Caco-2 (cell line): ENCODE measurements at regions of chr14 and their contacts with region 1.

Region 1: GRCh38 chr14:51651388-51652167 is at the start of gene FRMD6:
- DNase-seq: peak; percentile 89
- H3K4me3 ChIP-seq: peak within 1 kb of the TSS; percentile 96
- H3K4me3 Mint-ChIP-seq: peak within 1 kb of the TSS; percentile 77
- H3K27ac Mint-ChIP-seq: peak within 1 kb of the TSS; percentile 82
- H3K4me1 ChIP-seq: peaks cover 40% of the 10 kb centered on the region
- H3K4me1 Mint-ChIP-seq: peaks cover 36% of the 10 kb centered on the region
- H3K27me3 ChIP-seq: no peaks in the 10 kb centered on the region
- H3K27me3 Mint-ChIP-seq: no peaks in the 10 kb centered on the region
- CTCF ChIP-seq: peak; percentile 62 to 80
- total RNA-seq, gene FRMD6: 35.7 and 42.2 TPM in 2 replicates

Region 2: DNA sequence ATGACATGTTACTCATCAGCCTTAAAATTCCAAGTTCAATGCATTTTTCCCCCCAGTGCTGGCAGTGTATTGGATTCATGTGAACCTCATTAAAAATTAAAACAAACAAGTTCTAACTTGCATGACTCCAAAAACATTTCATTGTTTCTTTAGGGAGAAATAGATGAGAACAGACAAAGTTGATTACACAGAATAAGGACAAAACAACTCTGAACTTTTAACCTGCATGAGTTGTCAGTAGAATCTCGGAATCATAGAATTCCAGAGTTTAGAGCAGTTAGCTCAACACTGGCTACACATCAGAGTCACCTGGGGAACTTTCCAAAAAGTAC is 284.0 kb before region 1 on chr14:
- CTCF ChIA-PET with region 1: no interaction called
- POLR2A ChIA-PET with region 1: no interaction called
- intact Hi-C with region 1: loop called (anchors 2 kb)
- DNase-seq: no peak
- H3K4me3 ChIP-seq: no peak overlapping the region
- H3K4me3 Mint-ChIP-seq: no peak overlapping the region
- H3K27ac Mint-ChIP-seq: no peak overlapping the region
- H3K4me1 ChIP-seq: peaks cover 25% of the 10 kb centered on the region
- H3K4me1 Mint-ChIP-seq: no peaks in the 10 kb centered on the region
- H3K27me3 ChIP-seq: no peaks in the 10 kb centered on the region
- H3K27me3 Mint-ChIP-seq: no peaks in the 10 kb centered on the region
- CTCF ChIP-seq: no peak

Region 3: DNA sequence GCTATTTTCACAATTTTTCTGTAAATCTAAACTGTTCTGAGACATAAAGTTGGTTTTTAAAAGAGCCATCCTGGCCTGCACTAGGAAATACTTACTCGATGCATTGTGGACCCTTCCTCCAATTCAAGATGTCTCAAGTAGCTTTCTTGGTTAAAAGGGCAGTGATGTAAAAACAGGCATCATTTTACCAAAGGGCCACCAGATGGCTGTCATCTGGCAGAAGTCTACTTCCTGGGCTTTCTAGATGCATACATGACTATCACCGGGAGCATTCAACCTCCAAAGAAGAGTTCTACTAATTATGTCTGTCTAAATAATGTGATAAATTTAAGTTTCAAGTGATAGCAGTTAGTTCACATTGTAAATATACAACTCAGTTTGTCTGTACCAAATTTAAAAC is 96.6 kb before region 1 on chr14:
- CTCF ChIA-PET with region 1: interaction called, 4 read pairs
- POLR2A ChIA-PET with region 1: no interaction called
- intact Hi-C with region 1: loop called (anchors 1 kb)
- DNase-seq: peak in 1 of 2 experiments; percentile 28
- H3K4me3 ChIP-seq: no peak overlapping the region
- H3K4me3 Mint-ChIP-seq: no peak overlapping the region
- H3K27ac Mint-ChIP-seq: peak overlapping the region; percentile 17
- H3K4me1 ChIP-seq: peaks cover 19% of the 10 kb centered on the region
- H3K4me1 Mint-ChIP-seq: peaks cover 7% of the 10 kb centered on the region
- H3K27me3 ChIP-seq: no peaks in the 10 kb centered on the region
- H3K27me3 Mint-ChIP-seq: no peaks in the 10 kb centered on the region
- CTCF ChIP-seq: peak; percentile 19 to 48

Region 4: DNA sequence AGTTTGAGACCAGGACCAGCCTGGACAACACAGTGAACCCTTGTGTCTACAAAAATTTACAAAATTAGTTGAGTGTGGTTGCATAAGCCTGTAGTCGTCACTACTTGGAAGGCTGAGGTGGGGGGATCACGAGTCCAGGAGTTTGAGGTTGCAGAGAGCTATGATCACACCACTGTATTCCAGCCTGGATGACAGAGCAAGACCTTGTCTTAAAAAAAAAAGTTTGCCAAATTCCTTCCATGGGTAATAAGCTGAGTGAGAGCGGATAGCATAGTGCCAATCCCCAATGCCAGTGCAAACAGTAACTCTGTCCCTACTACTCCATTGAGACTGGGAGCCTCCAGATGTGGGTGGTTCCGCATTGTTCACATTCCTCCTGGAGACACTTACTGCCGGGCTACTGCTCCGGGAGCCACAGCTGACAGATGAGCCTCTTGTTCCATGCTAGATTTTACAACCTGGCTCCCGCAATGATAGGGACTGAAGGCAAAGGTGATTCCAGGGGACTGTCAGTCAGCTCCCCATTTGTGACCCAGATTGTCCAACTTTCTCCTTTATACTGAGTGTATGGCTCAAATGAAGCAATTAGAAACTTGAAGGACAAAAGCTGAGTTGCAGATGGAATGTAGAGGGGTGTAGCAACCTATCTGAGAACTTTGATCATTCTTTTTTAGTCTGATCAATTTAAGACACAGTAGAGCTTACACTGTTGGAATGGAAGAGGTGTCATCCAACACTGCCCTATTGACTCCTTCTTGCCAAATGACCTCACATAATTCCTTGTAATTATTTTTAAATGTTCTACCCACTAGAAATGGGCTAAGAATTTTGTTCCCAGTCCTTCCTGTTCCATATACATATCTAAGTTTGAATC is 13.3 kb before region 1 on chr14:
- CTCF ChIA-PET with region 1: interaction called, 9 read pairs
- POLR2A ChIA-PET with region 1: no interaction called
- intact Hi-C with region 1: loop called (anchors 1 kb)
- DNase-seq: peak; percentile 81 to 90
- H3K4me3 ChIP-seq: no peak overlapping the region
- H3K4me3 Mint-ChIP-seq: peak overlapping the region; percentile 23
- H3K27ac Mint-ChIP-seq: peak overlapping the region; percentile 75
- H3K4me1 ChIP-seq: peaks cover 42% of the 10 kb centered on the region
- H3K4me1 Mint-ChIP-seq: peaks cover 18% of the 10 kb centered on the region
- H3K27me3 ChIP-seq: no peaks in the 10 kb centered on the region
- H3K27me3 Mint-ChIP-seq: no peaks in the 10 kb centered on the region
- CTCF ChIP-seq: no peak

Region 5: DNA sequence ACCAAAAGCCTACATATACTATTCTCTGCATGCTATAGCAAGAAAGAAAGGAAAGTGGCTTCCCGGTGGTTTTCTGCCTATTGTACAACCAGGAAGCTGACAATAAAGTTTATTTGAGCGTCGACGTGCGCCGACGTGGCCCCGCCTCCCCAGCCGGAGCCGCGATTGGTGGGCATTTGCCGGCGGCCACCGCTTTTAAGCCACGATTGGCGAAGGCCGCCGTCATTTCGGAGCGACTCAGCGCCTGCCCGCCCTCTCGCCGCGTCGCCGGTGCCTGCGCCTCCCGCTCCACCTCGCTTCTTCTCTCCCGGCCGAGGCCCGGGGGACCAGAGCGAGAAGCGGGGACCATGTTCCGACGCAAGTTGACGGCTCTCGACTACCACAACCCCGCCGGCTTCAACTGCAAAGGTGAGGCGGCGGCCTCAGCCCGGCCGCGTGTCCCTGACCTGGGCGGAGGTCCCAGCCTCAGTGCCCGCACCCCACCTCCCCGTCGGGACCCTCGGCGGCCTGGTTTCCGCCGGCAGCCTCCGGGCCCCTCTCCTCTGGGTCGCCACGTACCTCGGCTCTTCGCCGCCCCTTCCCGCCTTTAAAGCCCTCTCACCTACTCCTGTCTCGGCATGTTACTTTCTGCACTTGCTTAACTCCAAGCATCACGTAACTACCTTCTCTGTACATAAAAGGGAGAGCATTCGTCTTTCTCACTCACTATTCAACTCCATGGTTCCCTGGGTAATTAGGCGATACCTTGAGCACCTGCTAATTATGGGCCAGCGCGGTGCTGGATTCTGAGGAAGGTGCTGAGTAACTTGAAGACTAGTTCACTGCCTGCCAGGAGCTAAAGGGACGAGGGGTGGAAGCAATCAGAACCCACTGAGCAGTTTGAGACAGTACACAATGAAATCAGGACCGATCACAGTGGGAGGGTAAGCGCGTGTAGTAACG is 338.0 kb after region 1 on chr14 and contains the start of gene RTRAF:
- CTCF ChIA-PET with region 1: no interaction called
- POLR2A ChIA-PET with region 1: no interaction called
- intact Hi-C with region 1: loop called (anchors 10 kb)
- DNase-seq: peak; percentile 92 to 95
- H3K4me3 ChIP-seq: peak within 1 kb of the TSS; percentile 90
- H3K4me3 Mint-ChIP-seq: peak within 1 kb of the TSS; percentile 89
- H3K27ac Mint-ChIP-seq: peak within 1 kb of the TSS; percentile 78
- H3K4me1 ChIP-seq: peaks cover 14% of the 10 kb centered on the region; the same call in 1 of the 2 replicates
- H3K4me1 Mint-ChIP-seq: peaks cover 15% of the 10 kb centered on the region
- H3K27me3 ChIP-seq: no peaks in the 10 kb centered on the region
- H3K27me3 Mint-ChIP-seq: no peaks in the 10 kb centered on the region
- CTCF ChIP-seq: no peak
- total RNA-seq, gene RTRAF: 217 and 223 TPM in 2 replicates